ENCODE measurements at regions of chr2 and their contacts with region 1.

Region 1: GRCh38 chr2:1601471-1602277 is 142.6 kb downstream of the PXDN start:
- H3K4me3 ChIP-seq: no peak overlapping the region
- H3K27ac ChIP-seq: no peak overlapping the region
- H3K4me1 ChIP-seq: no peaks in the 10 kb centered on the region
- CTCF ChIP-seq: no peak

Region 2: GRCh38 chr2:1613731-1614354 is 12.2 kb after region 1 on chr2:
- CTCF ChIA-PET with region 1: no interaction called
- POLR2A ChIA-PET with region 1: no interaction called
- H3K4me3 ChIP-seq: no peak overlapping the region
- H3K27ac ChIP-seq: no peak overlapping the region
- H3K4me1 ChIP-seq: 0 out of 2 replicates have a peak, but pooled peaks cover 3% of the 10 kb centered on the region
- CTCF ChIP-seq: no peak

Region 3: DNA sequence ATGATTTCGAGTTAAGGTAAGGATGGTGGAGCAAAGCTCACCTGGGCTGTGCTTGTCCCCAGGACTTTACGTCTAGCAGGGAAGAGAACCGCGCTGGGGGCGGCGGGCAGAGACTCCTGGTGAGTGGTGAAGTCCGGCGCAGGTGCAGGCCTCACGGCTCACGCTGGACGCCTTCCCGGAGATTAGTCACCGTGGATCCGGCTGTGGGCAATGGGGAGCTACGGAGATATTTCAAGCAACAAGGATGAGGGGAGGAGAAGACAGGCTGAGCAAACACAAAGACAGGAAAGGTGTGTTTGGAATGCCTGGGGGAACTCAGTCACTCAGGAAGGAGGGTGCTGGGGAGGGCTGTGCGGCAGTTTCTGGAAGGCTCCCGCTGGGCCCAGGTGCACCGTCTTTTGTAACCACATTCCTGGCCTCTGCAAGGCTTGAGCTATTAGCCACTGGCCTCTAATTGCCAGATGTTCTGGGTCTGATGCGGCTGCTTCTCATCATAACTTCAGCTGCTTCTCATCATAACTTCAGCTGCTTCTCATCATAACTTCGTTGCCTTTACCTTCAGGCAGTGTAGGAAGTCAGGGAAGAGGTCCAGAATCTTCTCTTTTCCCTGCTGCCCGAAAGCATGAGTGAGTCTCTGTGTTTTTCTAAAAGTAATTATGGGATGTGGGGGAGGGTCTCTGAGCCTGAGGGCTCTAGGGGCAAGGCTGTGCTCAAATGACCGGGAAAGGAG is 23.7 kb after region 1 on chr2:
- CTCF ChIA-PET with region 1: no interaction called
- POLR2A ChIA-PET with region 1: no interaction called
- H3K4me3 ChIP-seq: no peak overlapping the region
- H3K27ac ChIP-seq: no peak overlapping the region
- H3K4me1 ChIP-seq: no peaks in the 10 kb centered on the region
- CTCF ChIP-seq: no peak

Region 4: GRCh38 chr2:1718339-1719220 is 116.9 kb after region 1 on chr2:
- CTCF ChIA-PET with region 1: interaction called, 11 read pairs
- POLR2A ChIA-PET with region 1: no interaction called
- H3K4me3 ChIP-seq: no peak overlapping the region
- H3K27ac ChIP-seq: no peak overlapping the region
- H3K4me1 ChIP-seq: peaks cover 9% of the 10 kb centered on the region; the same call in 1 of the 2 replicates
- CTCF ChIP-seq: no peak

Measured in HEK293 (cell line).